Naive thymus-derived CD4-positive, alpha-beta T cell (primary cell): ENCODE measurements at regions of chr4 and their contacts with region 1.

Region 1: GRCh38 chr4:15956179-15956850 is 6.7 kb downstream of the FGFBP2 start:
- DNase-seq: peak; percentile 44 to 73 (median 65)
- ATAC-seq: peak; percentile 98
- H3K4me3 ChIP-seq: no peak overlapping the region
- H3K4me3 Mint-ChIP-seq: no peak overlapping the region
- H3K27ac ChIP-seq: no peak overlapping the region
- H3K27ac Mint-ChIP-seq: no peak overlapping the region
- H3K4me1 ChIP-seq: no peaks in the 10 kb centered on the region
- H3K4me1 Mint-ChIP-seq: peaks cover 0 to 7% (median 0%) of the 10 kb centered on the region in 7 donors
- H3K27me3 ChIP-seq: no peaks in the 10 kb centered on the region
- H3K27me3 Mint-ChIP-seq: peaks cover 0 to 13% (median 0%) of the 10 kb centered on the region in 5 donors

Region 2: GRCh38 chr4:15231265-15232091 is 724.8 kb before region 1 on chr4:
- CTCF ChIA-PET with region 1: interaction called, 3 read pairs
- POLR2A ChIA-PET with region 1: no interaction called
- intact Hi-C with region 1: loop called (anchors 1 kb)
- DNase-seq: peak; percentile 45 to 72 (median 69)
- ATAC-seq: peak; percentile 86
- H3K4me3 ChIP-seq: no peak overlapping the region
- H3K4me3 Mint-ChIP-seq: no peak overlapping the region
- H3K27ac ChIP-seq: no peak overlapping the region
- H3K27ac Mint-ChIP-seq: peak overlapping the region in 4 of 9 donors; percentile 11 to 68 (median 44)
- H3K4me1 ChIP-seq: peaks cover 0 to 27% of the 10 kb centered on the region in 2 donors
- H3K4me1 Mint-ChIP-seq: peaks cover 24 to 39% (median 35%) of the 10 kb centered on the region in 7 donors
- H3K27me3 ChIP-seq: no peaks in the 10 kb centered on the region
- H3K27me3 Mint-ChIP-seq: peaks cover 0 to 3% (median 0%) of the 10 kb centered on the region in 5 donors

Region 3: DNA sequence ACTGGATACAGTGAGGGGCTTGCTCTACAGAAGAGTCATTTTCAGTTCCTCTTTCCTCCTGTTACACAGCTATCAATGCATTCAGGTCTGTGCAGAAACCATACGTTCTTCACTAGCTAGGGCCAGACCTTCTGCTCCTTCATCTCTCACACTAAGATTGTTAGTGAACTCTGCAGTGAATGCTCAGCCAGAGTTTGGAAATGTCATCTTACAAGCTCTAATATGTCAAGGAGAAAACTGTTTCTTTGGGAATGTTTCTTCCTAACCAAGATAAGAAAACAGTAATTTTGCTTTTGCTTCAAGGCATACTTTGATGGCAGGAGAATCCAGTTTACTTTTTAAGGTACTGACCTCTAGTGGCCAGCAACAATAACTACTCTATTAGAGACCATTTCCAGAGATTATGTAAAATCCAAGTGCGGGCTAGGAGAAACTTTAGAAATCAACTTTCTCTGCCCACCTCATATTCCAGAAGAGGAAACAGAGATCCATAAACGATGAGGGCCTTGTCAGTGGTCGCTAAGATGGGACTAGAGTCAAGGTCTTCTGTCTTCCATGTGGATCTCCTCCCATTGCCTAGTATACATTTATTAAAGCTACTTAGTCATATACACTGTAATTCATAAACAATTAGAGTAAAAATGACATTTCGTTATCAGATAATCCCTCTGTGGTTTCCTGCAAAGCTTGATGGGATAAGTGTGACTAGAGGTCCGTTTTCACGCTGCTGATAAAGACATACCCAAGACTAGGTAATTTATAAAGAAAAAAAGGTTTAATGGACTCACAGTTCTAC is 498.7 kb before region 1 on chr4:
- CTCF ChIA-PET with region 1: no interaction called
- POLR2A ChIA-PET with region 1: no interaction called
- intact Hi-C with region 1: loop called in 1 of 2 experiments (anchors 5 kb)
- DNase-seq: peak in 6 of 9 donors; percentile 23 to 62 (median 56)
- ATAC-seq: peak; percentile 89
- H3K4me3 ChIP-seq: no peak overlapping the region
- H3K4me3 Mint-ChIP-seq: peak overlapping the region in 2 of 10 donors; percentile 3 to 17
- H3K27ac ChIP-seq: no peak overlapping the region
- H3K27ac Mint-ChIP-seq: peak overlapping the region in 3 of 9 donors; percentile 6 to 59 (median 14)
- H3K4me1 ChIP-seq: no peaks in the 10 kb centered on the region
- H3K4me1 Mint-ChIP-seq: peaks cover 0 to 12% (median 7%) of the 10 kb centered on the region in 7 donors
- H3K27me3 ChIP-seq: no peaks in the 10 kb centered on the region
- H3K27me3 Mint-ChIP-seq: peaks cover 0 to 25% (median 0%) of the 10 kb centered on the region in 5 donors

Region 4: DNA sequence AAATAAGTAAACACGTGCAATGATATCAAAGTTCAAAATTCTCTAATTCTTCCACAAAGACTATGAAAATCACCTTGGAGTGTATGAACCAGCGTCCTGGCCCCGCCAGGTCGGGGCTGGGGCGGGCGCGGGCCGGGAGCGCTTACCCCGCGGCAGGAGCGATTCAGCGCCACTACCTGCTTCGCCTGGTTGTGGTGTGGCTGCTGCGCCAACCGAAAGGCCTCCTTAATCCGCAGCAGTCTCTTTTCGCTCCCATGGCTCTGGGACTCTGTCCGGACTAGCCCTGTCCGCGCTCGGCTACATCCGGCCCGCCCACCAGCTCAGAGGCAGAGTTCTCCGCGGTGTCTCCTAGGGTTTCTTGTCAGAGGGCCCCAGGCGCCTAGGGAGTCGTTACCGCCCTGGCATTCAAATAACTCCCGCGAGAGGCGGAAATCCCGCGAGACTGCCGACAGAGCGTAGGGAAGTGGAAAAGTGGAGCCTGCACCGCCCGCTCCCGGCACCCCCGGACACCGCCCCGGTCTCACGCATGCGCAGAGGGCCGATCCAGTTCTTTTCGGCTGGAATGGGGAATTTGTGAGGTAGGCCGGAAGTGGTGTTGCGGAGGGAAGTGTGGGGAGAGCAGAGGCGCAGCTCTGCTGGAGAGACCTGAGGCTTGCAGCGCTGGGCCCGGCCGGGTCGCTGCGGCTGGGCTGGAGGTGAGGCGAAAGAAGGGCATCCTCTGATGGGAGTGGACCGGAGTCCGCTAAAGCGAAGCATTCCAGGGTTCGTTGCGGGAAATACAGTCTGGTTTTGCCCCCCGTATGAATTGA is 274.9 kb before region 1 on chr4 and contains the start of gene FAM200B:
- CTCF ChIA-PET with region 1: no interaction called
- POLR2A ChIA-PET with region 1: no interaction called
- intact Hi-C with region 1: loop called in 1 of 2 experiments (anchors 1 kb)
- DNase-seq: peak; percentile 87 to 100 (median 93)
- ATAC-seq: peak; percentile 98
- H3K4me3 ChIP-seq: peak within 1 kb of the TSS; percentile 78
- H3K4me3 Mint-ChIP-seq: peak within 1 kb of the TSS; percentile 88 to 99 (median 94)
- H3K27ac ChIP-seq: peak within 1 kb of the TSS; percentile 94
- H3K27ac Mint-ChIP-seq: peak within 1 kb of the TSS; percentile 89 to 100 (median 98)
- H3K4me1 ChIP-seq: peaks cover 5 to 11% of the 10 kb centered on the region in 2 donors
- H3K4me1 Mint-ChIP-seq: peaks cover 22 to 54% (median 42%) of the 10 kb centered on the region in 7 donors
- H3K27me3 ChIP-seq: no peaks in the 10 kb centered on the region
- H3K27me3 Mint-ChIP-seq: no peaks in the 10 kb centered on the region
- total RNA-seq, gene FAM200B: 10.6 to 42.8 (median 27.4) TPM

Region 5: GRCh38 chr4:15756361-15756861 is 199.9 kb before region 1 on chr4:
- CTCF ChIA-PET with region 1: interaction called, 3 read pairs
- POLR2A ChIA-PET with region 1: no interaction called
- intact Hi-C with region 1: loop called in 1 of 2 experiments (anchors 1 kb)
- DNase-seq: peak; percentile 33 to 83 (median 78)
- ATAC-seq: peak; percentile 89
- H3K4me3 ChIP-seq: peak overlapping the region; percentile 41
- H3K4me3 Mint-ChIP-seq: peak overlapping the region; percentile 64 to 92 (median 76)
- H3K27ac ChIP-seq: peak overlapping the region; percentile 39
- H3K27ac Mint-ChIP-seq: peak overlapping the region; percentile 81 to 98 (median 93)
- H3K4me1 ChIP-seq: peaks cover 35 to 36% of the 10 kb centered on the region in 2 donors
- H3K4me1 Mint-ChIP-seq: peaks cover 43 to 69% (median 62%) of the 10 kb centered on the region in 7 donors
- H3K27me3 ChIP-seq: no peaks in the 10 kb centered on the region
- H3K27me3 Mint-ChIP-seq: no peaks in the 10 kb centered on the region

Region 6: GRCh38 chr4:15882675-15883086 is 73.6 kb before region 1 on chr4:
- CTCF ChIA-PET with region 1: interaction called, 6 read pairs
- POLR2A ChIA-PET with region 1: no interaction called
- intact Hi-C with region 1: loop called (anchors 1 kb)
- DNase-seq: peak in 7 of 9 donors; percentile 22 to 52 (median 41)
- ATAC-seq: peak; percentile 89
- H3K4me3 ChIP-seq: no peak overlapping the region
- H3K4me3 Mint-ChIP-seq: no peak overlapping the region
- H3K27ac ChIP-seq: no peak overlapping the region
- H3K27ac Mint-ChIP-seq: peak overlapping the region in 1 of 9 donors; percentile 2
- H3K4me1 ChIP-seq: no peaks in the 10 kb centered on the region
- H3K4me1 Mint-ChIP-seq: peaks cover 0 to 13% (median 0%) of the 10 kb centered on the region in 7 donors
- H3K27me3 ChIP-seq: no peaks in the 10 kb centered on the region
- H3K27me3 Mint-ChIP-seq: peaks cover 0 to 20% (median 4%) of the 10 kb centered on the region in 5 donors

Region 7: DNA sequence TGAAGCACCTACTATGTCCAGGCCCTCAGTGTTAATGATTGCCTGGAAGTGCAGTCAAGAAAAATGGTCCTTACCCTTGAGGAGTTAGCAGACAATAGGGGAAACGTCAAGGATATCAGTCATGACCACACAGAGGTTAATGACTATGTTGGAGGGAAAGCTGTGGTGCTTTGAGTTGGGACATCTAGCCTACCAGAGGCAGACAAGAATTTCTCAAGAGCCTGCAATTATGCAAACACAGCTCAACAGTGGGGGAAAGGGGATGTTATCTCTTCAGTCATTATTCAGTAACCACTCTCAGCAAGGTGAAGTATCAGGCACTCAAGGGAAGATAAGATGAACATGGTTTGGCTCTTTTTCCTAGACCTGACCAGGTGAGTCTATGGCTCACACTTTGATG is 10.8 kb before region 1 on chr4:
- CTCF ChIA-PET with region 1: no interaction called
- POLR2A ChIA-PET with region 1: no interaction called
- intact Hi-C with region 1: no loop called
- DNase-seq: no peak
- ATAC-seq: peak; percentile 64
- H3K4me3 ChIP-seq: no peak overlapping the region
- H3K4me3 Mint-ChIP-seq: no peak overlapping the region
- H3K27ac ChIP-seq: no peak overlapping the region
- H3K27ac Mint-ChIP-seq: no peak overlapping the region
- H3K4me1 ChIP-seq: no peaks in the 10 kb centered on the region
- H3K4me1 Mint-ChIP-seq: peaks cover 0 to 2% (median 0%) of the 10 kb centered on the region in 7 donors
- H3K27me3 ChIP-seq: no peaks in the 10 kb centered on the region
- H3K27me3 Mint-ChIP-seq: peaks cover 0 to 6% (median 1%) of the 10 kb centered on the region in 5 donors

Region 8: GRCh38 chr4:16006791-16007446 is 50.6 kb after region 1 on chr4:
- CTCF ChIA-PET with region 1: no interaction called
- POLR2A ChIA-PET with region 1: no interaction called
- intact Hi-C with region 1: no loop called
- DNase-seq: no peak
- ATAC-seq: no peak
- H3K4me3 ChIP-seq: no peak overlapping the region
- H3K4me3 Mint-ChIP-seq: no peak overlapping the region
- H3K27ac ChIP-seq: no peak overlapping the region
- H3K27ac Mint-ChIP-seq: no peak overlapping the region
- H3K4me1 ChIP-seq: no peaks in the 10 kb centered on the region
- H3K4me1 Mint-ChIP-seq: no peaks in the 10 kb centered on the region
- H3K27me3 ChIP-seq: no peaks in the 10 kb centered on the region
- H3K27me3 Mint-ChIP-seq: peaks cover 3 to 14% (median 11%) of the 10 kb centered on the region in 5 donors

Region 9: GRCh38 chr4:17866810-17867209 is 1910.5 kb after region 1 on chr4:
- CTCF ChIA-PET with region 1: no interaction called
- POLR2A ChIA-PET with region 1: no interaction called
- intact Hi-C with region 1: no loop called
- DNase-seq: no peak
- ATAC-seq: no peak
- H3K4me3 ChIP-seq: no peak overlapping the region
- H3K4me3 Mint-ChIP-seq: no peak overlapping the region
- H3K27ac ChIP-seq: no peak overlapping the region
- H3K27ac Mint-ChIP-seq: no peak overlapping the region
- H3K4me1 ChIP-seq: no peaks in the 10 kb centered on the region
- H3K4me1 Mint-ChIP-seq: no peaks in the 10 kb centered on the region
- H3K27me3 ChIP-seq: no peaks in the 10 kb centered on the region
- H3K27me3 Mint-ChIP-seq: no peaks in the 10 kb centered on the region